ENCODE measurements at regions of chr17 and their contacts with region 1.

Region 1: DNA sequence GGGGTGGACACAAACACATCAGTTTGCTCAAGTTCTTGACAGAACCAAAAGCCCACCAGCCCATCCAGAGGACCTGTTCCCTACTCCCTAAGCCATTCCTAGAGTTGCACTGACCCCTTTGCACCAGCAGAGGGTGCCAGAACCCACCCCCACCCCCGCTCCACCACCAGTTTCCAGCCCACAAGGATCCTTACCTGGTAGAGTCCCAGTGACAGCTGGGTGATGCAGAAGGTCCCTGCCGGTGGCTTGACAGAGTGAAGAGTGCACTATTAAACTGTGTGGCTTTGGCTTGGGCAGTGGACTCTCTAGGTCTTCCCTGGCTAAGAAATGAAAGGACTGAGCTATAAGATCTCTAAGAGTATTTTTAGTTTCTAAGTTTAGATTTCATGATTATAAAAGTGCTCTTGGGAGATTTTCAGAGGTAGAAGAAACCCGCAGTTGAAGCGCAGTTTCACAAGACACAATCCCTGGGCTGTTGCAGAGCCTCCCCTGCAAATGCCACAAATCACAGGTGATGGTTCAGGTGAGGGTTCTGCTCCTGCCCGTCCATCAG is 73.3 kb upstream of the MTMR4 start:
- DNase-seq: peak; percentile 39 to 61 (median 42)
- ATAC-seq: peak in 3 of 4 donors; percentile 72 to 83 (median 78)
- H3K4me3 ChIP-seq: no peak overlapping the region
- H3K27ac ChIP-seq: no peak overlapping the region
- H3K4me1 ChIP-seq: no peaks in the 10 kb centered on the region
- H3K27me3 ChIP-seq: no peaks in the 10 kb centered on the region
- CTCF ChIP-seq: peak; percentile 86 to 95 (median 91)
- POLR2A ChIP-seq: no peak

Region 2: GRCh38 chr17:58541249-58541648 is 46.5 kb before region 1 on chr17:
- intact Hi-C with region 1: loop called in 1 of 10 experiments (anchors 5 kb)
- DNase-seq: no peak
- ATAC-seq: no peak
- H3K4me3 ChIP-seq: no peak overlapping the region
- H3K27ac ChIP-seq: no peak overlapping the region
- H3K4me1 ChIP-seq: peaks cover 7 to 40% (median 25%) of the 10 kb centered on the region in 12 donors
- H3K27me3 ChIP-seq: no peaks in the 10 kb centered on the region
- CTCF ChIP-seq: peak in 4 of 12 donors; percentile 5 to 26 (median 18)
- POLR2A ChIP-seq: no peak

Region 3: GRCh38 chr17:58631523-58632323 is 43.9 kb after region 1 on chr17:
- intact Hi-C with region 1: loop called in 1 of 10 experiments (anchors 5 kb)
- DNase-seq: peak; percentile 94 to 96 (median 95)
- ATAC-seq: peak; percentile 97 to 98 (median 97)
- H3K4me3 ChIP-seq: peak overlapping the region; percentile 2 to 61 (median 48)
- H3K27ac ChIP-seq: peak overlapping the region; percentile 49 to 93 (median 78)
- H3K4me1 ChIP-seq: peaks cover 0 to 24% (median 4%) of the 10 kb centered on the region in 12 donors
- H3K27me3 ChIP-seq: no peaks in the 10 kb centered on the region
- CTCF ChIP-seq: peak in 7 of 12 donors; percentile 6 to 43 (median 22)
- POLR2A ChIP-seq: peak in 1 of 2 donors; percentile 84

Region 4: GRCh38 chr17:58692239-58693055 is 104.7 kb after region 1 on chr17 and contains the start of gene RAD51C:
- intact Hi-C with region 1: loop called in 5 of 10 experiments (anchors 5 to 10 kb)
- DNase-seq: peak; percentile 86 to 93 (median 87)
- ATAC-seq: peak; percentile 89 to 100 (median 100)
- H3K4me3 ChIP-seq: peak within 1 kb of the TSS; percentile 45 to 87 (median 70)
- H3K27ac ChIP-seq: peak within 1 kb of the TSS in 11 of 12 donors; percentile 53 to 91 (median 79)
- H3K4me1 ChIP-seq: peaks cover 0 to 19% (median 11%) of the 10 kb centered on the region in 12 donors
- H3K27me3 ChIP-seq: no peaks in the 10 kb centered on the region
- CTCF ChIP-seq: no peak
- POLR2A ChIP-seq: peak in 1 of 2 donors; percentile 57
- total RNA-seq, gene RAD51C: 17.1 to 48.9 (median 39.6) TPM

Region 5: GRCh38 chr17:58703137-58703972 is 115.6 kb after region 1 on chr17:
- intact Hi-C with region 1: loop called in 5 of 10 experiments (anchors 5 to 10 kb)
- DNase-seq: no peak
- ATAC-seq: no peak
- H3K4me3 ChIP-seq: no peak overlapping the region
- H3K27ac ChIP-seq: no peak overlapping the region
- H3K4me1 ChIP-seq: no peaks in the 10 kb centered on the region
- H3K27me3 ChIP-seq: no peaks in the 10 kb centered on the region
- CTCF ChIP-seq: no peak
- POLR2A ChIP-seq: no peak

Region 6: GRCh38 chr17:59004338-59005111 is 416.7 kb after region 1 on chr17:
- intact Hi-C with region 1: loop called in 7 of 10 experiments (anchors 2 to 5 kb)
- DNase-seq: peak in 4 of 5 donors; percentile 39 to 48 (median 46)
- ATAC-seq: peak in 3 of 4 donors; percentile 70 to 76 (median 72)
- H3K4me3 ChIP-seq: no peak overlapping the region
- H3K27ac ChIP-seq: peak overlapping the region in 1 of 12 donors; percentile 6
- H3K4me1 ChIP-seq: peaks cover 0 to 31% (median 5%) of the 10 kb centered on the region in 12 donors
- H3K27me3 ChIP-seq: no peaks in the 10 kb centered on the region
- CTCF ChIP-seq: peak; percentile 90 to 98 (median 96)
- POLR2A ChIP-seq: no peak

Measured in heart left ventricle (tissue), 16 donors.